Gastrocnemius medialis (tissue), 4 donors: ENCODE measurements at regions of chr13 and their contacts with region 1.

Region 1: GRCh38 chr13:42271337-42272114 is 426 bp upstream of the AKAP11 start:
- DNase-seq: peak; percentile 82 to 91
- ATAC-seq: peak; percentile 91 to 92
- H3K4me3 ChIP-seq: peak overlapping the region; percentile 69 to 81 (median 70)
- H3K27ac ChIP-seq: peak overlapping the region; percentile 66 to 79 (median 74)
- H3K4me1 ChIP-seq: peaks cover 14 to 15% of the 10 kb centered on the region in 2 donors
- H3K27me3 ChIP-seq: peaks cover 0 to 5% (median 0%) of the 10 kb centered on the region in 3 donors
- CTCF ChIP-seq: no peak
- POLR2A ChIP-seq: no peak

Region 2: GRCh38 chr13:42048682-42049453 is 222.7 kb before region 1 on chr13:
- in situ Hi-C with region 1: no loop called
- intact Hi-C with region 1: loop called (anchors 5 kb)
- DNase-seq: peak; percentile 71
- ATAC-seq: peak; percentile 81 to 84
- H3K4me3 ChIP-seq: peak overlapping the region; percentile 67 to 95 (median 90)
- H3K27ac ChIP-seq: peak overlapping the region; percentile 74 to 88 (median 87)
- H3K4me1 ChIP-seq: peaks cover 3 to 7% of the 10 kb centered on the region in 2 donors
- H3K27me3 ChIP-seq: no peaks in the 10 kb centered on the region
- CTCF ChIP-seq: peak in 3 of 5 experiments; percentile 19 to 27 (median 22)
- POLR2A ChIP-seq: peak; percentile 26 to 37

Region 3: GRCh38 chr13:42345367-42345766 is 73.8 kb after region 1 on chr13:
- in situ Hi-C with region 1: no loop called
- intact Hi-C with region 1: no loop called
- DNase-seq: no peak
- ATAC-seq: no peak
- H3K4me3 ChIP-seq: no peak overlapping the region
- H3K27ac ChIP-seq: no peak overlapping the region
- H3K4me1 ChIP-seq: no peaks in the 10 kb centered on the region
- H3K27me3 ChIP-seq: no peaks in the 10 kb centered on the region
- CTCF ChIP-seq: no peak
- POLR2A ChIP-seq: no peak